Cardiac septum (tissue), 1 donor: ENCODE measurements at regions of chr1 and their contacts with region 1.

Region 1: DNA sequence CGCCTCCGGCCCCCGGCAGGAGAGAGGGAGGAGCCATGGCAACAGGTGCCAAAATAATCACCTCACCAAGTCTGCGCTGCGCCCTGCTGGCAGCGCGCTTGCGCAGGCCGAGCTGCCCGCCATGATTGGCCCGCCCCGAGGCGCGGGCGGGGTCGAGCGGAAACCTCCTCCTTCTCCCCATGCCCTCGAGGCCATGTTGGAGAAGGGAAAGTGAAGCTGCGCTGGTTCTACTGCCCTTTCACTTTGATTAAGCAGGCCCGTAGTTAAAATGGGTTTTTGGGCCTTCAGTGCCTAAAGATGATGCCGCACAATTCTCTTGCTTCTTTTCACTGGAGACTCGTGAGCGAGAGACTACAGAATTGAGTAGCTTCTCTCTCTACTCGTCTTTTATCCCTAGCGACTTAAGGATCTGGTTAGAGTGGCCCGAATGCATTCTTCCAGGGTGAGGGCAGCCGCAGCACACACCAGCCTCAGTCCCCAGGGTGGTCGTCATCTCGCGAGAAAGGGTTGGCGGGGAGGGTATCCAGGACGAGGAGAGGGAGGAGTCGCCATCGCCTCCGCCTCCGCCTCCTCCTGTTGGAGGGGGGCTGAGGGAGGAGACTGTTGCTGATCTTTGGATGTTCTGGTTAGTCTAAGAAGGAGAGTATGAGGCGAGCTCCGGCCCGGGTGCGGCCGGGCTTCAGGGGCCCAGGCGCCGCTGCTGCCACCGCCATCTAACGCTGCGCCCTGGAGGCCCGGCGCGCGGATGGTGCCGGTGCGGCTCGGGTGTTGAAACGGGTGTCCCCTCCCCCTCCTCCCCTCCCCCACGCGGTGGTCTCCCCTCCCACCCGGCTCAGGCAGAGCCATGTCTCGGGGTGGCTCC is at the start of gene DCAF6:
- DNase-seq: peak; percentile 99
- total RNA-seq, gene DCAF6: 167 TPM

Region 2: GRCh38 chr1:167312871-167313270 is 623.4 kb before region 1 on chr1:
- intact Hi-C with region 1: no loop called
- DNase-seq: no peak

Region 3: DNA sequence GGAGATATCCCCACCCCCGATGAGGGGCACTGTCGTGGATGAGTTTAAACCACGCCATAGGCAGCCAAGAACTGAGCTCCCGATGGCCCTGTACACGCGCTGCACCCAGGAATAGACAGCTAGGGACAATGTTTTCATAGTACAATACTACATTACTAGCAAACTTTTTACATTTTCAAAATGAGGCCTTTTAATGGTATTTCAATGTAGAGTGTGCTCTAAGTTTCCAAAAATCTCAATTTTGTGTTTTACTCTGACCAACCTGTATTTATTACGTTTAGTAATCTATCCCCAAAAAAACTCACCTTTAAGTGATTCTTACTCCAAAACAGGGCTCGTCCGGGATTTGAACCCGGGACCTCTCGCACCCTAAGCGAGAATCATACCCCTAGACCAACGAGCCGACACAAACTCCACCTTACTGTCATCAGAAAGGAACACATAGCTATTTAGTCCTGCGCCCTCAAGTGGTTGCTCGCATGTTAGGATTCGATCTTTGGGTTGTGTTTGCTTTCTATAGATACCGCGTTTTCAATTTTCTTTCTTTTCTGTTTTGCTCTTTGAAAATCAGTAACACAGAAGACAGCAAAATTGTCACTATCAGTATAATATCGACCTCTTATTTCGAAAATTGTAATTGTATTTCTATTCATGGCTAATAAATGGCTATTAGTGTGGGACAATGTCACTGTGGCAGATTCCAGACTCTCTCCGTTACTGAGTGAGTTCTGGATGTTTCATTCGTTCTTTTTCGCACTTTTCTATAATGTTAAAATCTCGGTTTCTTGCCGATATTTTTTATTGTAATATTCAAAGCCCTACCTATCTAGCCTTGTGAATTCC is 220.9 kb before region 1 on chr1:
- intact Hi-C with region 1: loop called (anchors 2 kb)
- DNase-seq: peak; percentile 87

Region 4: DNA sequence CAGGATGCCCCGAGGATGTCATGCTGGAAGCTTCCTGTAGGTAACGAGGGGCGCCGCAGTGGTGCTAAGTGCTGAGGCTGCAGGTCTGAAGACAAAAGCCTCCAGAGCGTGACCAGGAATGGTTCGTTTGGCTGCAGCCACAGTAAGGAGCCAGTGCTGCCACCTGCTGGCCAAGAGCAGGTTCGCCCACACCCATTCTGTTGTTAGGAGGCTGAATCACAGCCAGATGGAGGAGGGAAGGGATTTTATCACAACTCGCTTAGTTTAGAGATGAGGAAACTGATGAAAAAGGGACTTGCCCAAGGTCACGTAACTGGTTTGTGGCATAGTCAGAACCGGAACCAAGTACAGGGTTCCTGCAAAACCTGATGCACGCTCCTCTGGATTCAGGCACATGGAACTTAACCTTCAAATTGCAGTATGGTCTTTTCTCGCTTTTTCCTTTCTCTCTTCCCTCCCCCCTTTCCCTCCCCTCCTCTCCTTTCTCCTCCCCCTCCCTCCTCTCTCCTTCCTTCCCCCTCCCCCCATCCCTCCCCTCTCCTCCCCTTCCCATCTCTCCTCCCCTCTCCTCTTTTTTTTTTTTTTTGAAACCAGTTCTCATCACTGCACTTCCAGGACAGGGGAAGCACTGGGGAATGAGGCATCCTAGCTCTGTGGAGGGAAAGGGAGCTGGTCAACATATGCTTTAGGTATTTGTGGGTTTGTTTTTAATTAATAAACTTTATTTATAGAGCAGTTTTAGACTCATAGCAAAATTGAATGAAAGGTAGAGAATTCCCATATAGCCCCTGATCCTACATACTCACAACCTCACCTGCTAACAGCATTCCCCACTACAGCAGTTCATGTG is 132.7 kb before region 1 on chr1:
- intact Hi-C with region 1: loop called (anchors 5 kb)
- DNase-seq: peak; percentile 95

Region 5: DNA sequence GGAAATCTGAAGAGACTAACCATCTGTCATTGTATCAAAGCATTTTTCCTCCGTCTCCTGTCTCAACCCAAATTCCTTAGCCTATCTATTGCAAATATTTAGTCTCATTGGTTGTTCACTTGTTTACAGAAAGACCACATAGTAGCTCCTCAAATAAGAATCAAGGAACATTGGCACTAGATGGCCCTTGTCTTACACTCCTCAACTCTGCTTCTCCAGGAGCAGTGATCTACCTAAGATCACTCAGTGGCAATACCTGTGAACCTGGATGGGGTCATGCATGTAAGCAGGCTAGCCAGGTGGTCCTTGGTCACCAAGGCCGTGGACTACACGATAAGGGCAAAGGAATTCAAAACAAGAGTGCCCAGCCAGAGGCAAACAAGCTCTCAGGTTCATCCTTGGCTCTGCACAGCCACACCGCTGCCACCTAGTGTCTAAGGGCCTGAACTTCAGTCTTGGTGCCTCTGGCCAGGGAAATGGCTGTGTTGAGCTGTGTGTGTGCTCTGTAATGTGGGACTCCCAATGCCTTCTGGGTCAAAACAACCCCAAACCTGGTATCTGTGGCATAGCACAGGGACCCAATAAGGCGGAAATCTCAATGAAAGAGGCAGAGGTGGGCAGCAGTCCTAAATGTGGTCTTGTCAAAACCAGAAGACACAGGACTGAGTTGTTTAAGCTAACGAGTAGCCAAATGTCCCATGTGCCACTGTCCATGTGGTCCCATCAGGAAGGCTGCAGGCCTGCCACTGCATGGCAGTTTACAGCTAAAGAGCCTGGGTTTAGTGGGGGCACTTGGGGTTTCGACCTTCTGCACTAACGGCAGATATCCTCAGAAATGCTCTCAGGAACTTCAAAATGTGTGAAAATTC is 145.9 kb after region 1 on chr1:
- intact Hi-C with region 1: loop called (anchors 5 kb)
- DNase-seq: no peak

Region 6: GRCh38 chr1:169367486-169368405 is 1431.4 kb after region 1 on chr1 and contains the starts of genes BLZF1 and NME7:
- intact Hi-C with region 1: loop called (anchors 10 kb)
- DNase-seq: peak; percentile 98
- total RNA-seq, gene BLZF1: 23.1 TPM
- total RNA-seq, gene NME7: 9.8 TPM